PC-3 (cell line): ENCODE measurements at regions of chr3 and their contacts with region 1.

Region 1: GRCh38 chr3:98732286-98733052 is 30.7 kb upstream of the ST3GAL6 start:
- DNase-seq: peak; percentile 67
- ATAC-seq: peak; percentile 62
- H3K4me3 ChIP-seq: peak overlapping the region; percentile 96
- H3K27ac ChIP-seq: peak overlapping the region; percentile 33
- H3K4me1 ChIP-seq: peaks cover 48% of the 10 kb centered on the region
- H3K27me3 ChIP-seq: no peaks in the 10 kb centered on the region
- CTCF ChIP-seq: no peak

Region 2: GRCh38 chr3:97705764-97706163 is 1026.7 kb before region 1 on chr3:
- CTCF ChIA-PET with region 1: no interaction called
- POLR2A ChIA-PET with region 1: interaction called, 20 read pairs
- intact Hi-C with region 1: no loop called
- DNase-seq: no peak
- ATAC-seq: no peak
- H3K4me3 ChIP-seq: no peak overlapping the region
- H3K27ac ChIP-seq: no peak overlapping the region
- H3K4me1 ChIP-seq: no peaks in the 10 kb centered on the region
- H3K27me3 ChIP-seq: no peaks in the 10 kb centered on the region
- CTCF ChIP-seq: no peak

Region 3: GRCh38 chr3:98695796-98696195 is 36.7 kb before region 1 on chr3:
- CTCF ChIA-PET with region 1: no interaction called
- POLR2A ChIA-PET with region 1: no interaction called
- intact Hi-C with region 1: loop called (anchors 2 kb)
- DNase-seq: peak; percentile 79
- ATAC-seq: peak; percentile 53
- H3K4me3 ChIP-seq: peak overlapping the region; percentile 19; the same call in 1 of the 2 replicates
- H3K27ac ChIP-seq: peak overlapping the region; percentile 57
- H3K4me1 ChIP-seq: peaks cover 45% of the 10 kb centered on the region
- H3K27me3 ChIP-seq: no peaks in the 10 kb centered on the region
- CTCF ChIP-seq: no peak

Region 4: GRCh38 chr3:98763076-98763475 is 30.6 kb after region 1 on chr3 and contains the start of gene ST3GAL6:
- CTCF ChIA-PET with region 1: no interaction called
- POLR2A ChIA-PET with region 1: no interaction called
- intact Hi-C with region 1: no loop called
- DNase-seq: no peak
- ATAC-seq: no peak
- H3K4me3 ChIP-seq: no peak within 1 kb of the TSS
- H3K27ac ChIP-seq: no peak within 1 kb of the TSS
- H3K4me1 ChIP-seq: peaks cover 24% of the 10 kb centered on the region
- H3K27me3 ChIP-seq: no peaks in the 10 kb centered on the region
- CTCF ChIP-seq: no peak
- total RNA-seq, gene ST3GAL6: 7.3 and 11.5 TPM in 2 replicates

Region 5: GRCh38 chr3:98994128-98994762 is 261.8 kb after region 1 on chr3:
- CTCF ChIA-PET with region 1: no interaction called
- POLR2A ChIA-PET with region 1: no interaction called
- intact Hi-C with region 1: loop called (anchors 5 kb)
- DNase-seq: peak; percentile 84
- ATAC-seq: peak; percentile 70
- H3K4me3 ChIP-seq: no peak overlapping the region
- H3K27ac ChIP-seq: peak overlapping the region; percentile 7; the same call in 1 of the 2 replicates
- H3K4me1 ChIP-seq: peaks cover 7% of the 10 kb centered on the region; the same call in 1 of the 2 replicates
- H3K27me3 ChIP-seq: no peaks in the 10 kb centered on the region
- CTCF ChIP-seq: peak; percentile 93